Posterior cingulate gyrus (tissue), 11 donors: ENCODE measurements at regions of chr3 and their contacts with region 1.

Region 1: GRCh38 chr3:180594631-180595558 is 7.1 kb upstream of the TTC14 start:
- DNase-seq: no peak

Region 2: GRCh38 chr3:179768080-179768479 is 826.8 kb before region 1 on chr3:
- intact Hi-C with region 1: loop called (anchors 5 kb)
- DNase-seq: peak in 6 of 10 donors; percentile 30 to 89 (median 42)

Region 3: GRCh38 chr3:179822296-179822695 is 772.6 kb before region 1 on chr3:
- intact Hi-C with region 1: loop called (anchors 5 kb)
- DNase-seq: no peak

Region 4: GRCh38 chr3:180457225-180457624 is 137.7 kb before region 1 on chr3:
- intact Hi-C with region 1: no loop called
- DNase-seq: no peak